ENCODE measurements at regions of chr12 and their contacts with region 1.

Region 1: DNA sequence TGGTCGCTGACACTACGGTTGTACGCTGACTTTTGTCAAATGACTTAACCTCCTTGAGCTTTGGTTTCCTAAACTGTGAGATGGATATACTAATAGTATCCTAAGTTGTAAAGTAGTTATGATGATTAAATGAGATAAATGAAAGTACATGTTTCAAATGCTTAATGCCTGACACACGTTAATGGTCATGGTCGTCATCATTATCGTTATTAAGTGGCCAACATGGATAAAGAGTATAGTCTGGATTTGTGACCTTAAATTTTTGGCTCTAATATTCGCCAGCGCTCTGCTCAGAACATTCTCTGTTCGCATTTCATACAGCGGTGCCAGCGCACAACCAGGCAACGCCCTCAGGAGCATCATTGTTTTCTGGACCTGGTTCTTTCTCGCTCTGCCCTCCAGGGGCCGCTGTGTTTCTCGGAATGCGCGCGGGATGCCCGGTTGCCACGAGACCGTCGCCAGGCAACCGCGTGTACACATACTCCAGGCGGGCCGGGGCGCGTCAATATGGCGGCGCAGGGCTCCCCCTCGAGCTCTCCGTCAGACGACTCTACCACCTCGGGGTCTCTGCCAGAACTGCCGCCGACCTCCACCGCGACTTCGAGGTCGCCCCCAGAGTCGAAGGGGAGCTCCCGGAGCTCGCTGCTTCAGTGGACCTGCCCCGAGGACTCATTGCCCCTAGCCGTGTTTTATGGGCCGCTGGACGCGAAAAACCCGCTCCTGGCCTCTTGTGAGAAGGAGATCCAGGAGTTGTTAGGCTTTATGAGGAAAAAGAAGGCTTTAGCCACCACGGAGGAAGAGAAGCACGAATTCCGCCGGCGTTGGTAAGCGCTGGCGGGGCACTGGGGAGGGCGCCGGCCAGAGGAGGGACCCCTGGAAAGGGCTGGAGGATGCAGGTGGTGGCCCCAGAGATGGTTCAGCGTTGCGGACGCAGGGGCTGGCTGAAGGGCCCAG is at the start of gene CFAP54:
- DNase-seq: peak; percentile 86 to 95
- ATAC-seq: peak; percentile 95 to 96
- H3K4me3 ChIP-seq: peak within 1 kb of the TSS; percentile 89
- H3K27ac ChIP-seq: peak within 1 kb of the TSS; percentile 77 to 93
- H3K4me1 ChIP-seq: peaks cover 39% of the 10 kb centered on the region
- CTCF ChIP-seq: peak; percentile 81
- EP300 ChIP-seq: no peak
- POLR2A ChIP-seq: peak; percentile 26; the same call in 1 of the 2 replicates
- RAD21 ChIP-seq: peak; percentile 61 to 68
- polyA plus RNA-seq, gene CFAP54: 1.2 and 1.7 TPM in 2 replicates

Region 2: DNA sequence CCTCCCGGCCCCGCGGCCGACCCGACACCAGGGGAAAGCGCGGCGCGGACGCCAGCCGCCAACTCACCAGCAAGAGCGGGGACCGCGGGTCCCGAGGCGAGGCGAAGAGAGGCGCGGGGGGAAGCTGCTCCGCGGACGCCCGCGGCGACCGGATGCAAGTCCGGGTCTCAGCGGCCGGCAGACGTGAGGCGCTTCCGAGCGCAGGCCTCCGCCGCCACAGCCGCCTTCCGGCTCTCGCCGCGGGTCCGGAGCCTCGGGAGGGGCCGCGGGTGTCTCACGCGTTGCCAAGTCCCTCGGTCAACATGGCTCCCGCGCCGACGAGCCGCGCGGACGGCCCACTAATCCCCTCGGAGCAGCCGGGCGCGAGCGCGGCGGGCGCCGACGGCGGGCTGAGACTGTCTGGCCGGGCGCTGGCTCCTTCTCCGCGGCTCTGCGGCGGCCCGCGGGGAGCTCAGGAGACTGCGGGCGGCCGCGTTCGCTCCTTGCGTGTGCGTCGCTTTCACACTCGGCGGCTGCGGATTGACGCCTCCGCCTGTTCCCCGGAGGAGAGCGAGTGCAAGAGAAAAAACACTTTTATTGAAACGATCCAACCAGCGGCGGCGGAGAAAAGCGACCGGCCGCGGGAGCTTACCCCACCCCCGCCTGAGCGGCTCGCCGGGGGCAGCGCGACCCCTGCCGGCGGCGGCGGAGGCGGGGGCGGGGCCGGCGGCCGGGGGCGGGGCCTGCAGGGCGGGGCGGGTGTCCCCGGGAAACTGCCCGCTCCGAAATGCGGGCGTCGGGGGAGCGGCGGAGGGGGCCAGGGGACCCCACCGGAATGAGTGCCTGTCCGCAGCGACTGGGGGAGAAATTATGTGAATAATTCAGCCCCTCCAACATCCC is 89.2 kb before region 1 on chr12 and contains the start of gene CDK17:
- CTCF ChIA-PET with region 1: interaction called, 11 read pairs
- POLR2A ChIA-PET with region 1: interaction called, 14 read pairs
- DNase-seq: peak; percentile 78 to 86
- ATAC-seq: peak; percentile 66 to 77
- H3K4me3 ChIP-seq: peak within 1 kb of the TSS; percentile 90
- H3K27ac ChIP-seq: peak within 1 kb of the TSS; percentile 96
- H3K4me1 ChIP-seq: peaks cover 33% of the 10 kb centered on the region
- CTCF ChIP-seq: peak; percentile 90
- EP300 ChIP-seq: no peak
- POLR2A ChIP-seq: peak; percentile 47
- RAD21 ChIP-seq: peak; percentile 43 to 79
- polyA plus RNA-seq, gene CDK17: 34.5 and 43.5 TPM in 2 replicates

Region 3: DNA sequence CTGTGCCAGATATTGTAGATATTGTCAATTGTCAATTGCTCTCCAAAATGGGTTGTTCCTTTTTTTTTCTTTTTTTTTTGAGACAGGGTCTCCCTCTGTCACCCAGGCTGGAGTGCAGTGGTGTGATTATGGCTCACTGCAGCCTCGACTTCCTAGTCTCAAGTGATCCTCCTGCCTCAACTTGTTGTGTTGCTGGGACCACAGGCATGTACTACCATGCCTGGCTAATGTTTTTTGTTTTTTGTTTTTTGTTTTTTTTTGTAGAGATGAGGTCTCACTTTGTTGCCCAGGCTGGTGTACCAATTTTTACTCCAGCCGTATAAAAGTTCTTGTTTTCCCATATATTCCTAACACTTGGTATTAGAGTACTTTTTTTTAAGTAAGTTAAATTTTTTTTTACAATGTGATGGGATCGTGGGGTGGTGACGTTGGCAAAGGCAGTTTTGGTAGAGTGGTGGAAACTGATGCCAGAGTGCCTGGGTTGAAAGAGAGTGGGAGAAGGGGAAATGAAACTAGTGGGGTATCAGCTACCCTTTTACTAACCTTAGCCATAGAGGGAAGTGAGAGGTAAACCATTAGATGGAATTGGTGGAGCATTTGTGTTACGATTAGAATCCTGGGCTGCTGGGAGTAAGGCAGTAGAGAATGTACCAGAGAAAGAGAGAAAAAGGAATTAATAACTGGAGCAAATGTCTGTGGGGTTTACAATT is 33.0 kb before region 1 on chr12:
- CTCF ChIA-PET with region 1: interaction called, 11 read pairs
- POLR2A ChIA-PET with region 1: no interaction called
- DNase-seq: no peak
- ATAC-seq: no peak
- H3K4me3 ChIP-seq: no peak overlapping the region
- H3K27ac ChIP-seq: no peak overlapping the region
- H3K4me1 ChIP-seq: no peaks in the 10 kb centered on the region
- CTCF ChIP-seq: no peak
- EP300 ChIP-seq: no peak
- POLR2A ChIP-seq: no peak
- RAD21 ChIP-seq: no peak

Region 4: DNA sequence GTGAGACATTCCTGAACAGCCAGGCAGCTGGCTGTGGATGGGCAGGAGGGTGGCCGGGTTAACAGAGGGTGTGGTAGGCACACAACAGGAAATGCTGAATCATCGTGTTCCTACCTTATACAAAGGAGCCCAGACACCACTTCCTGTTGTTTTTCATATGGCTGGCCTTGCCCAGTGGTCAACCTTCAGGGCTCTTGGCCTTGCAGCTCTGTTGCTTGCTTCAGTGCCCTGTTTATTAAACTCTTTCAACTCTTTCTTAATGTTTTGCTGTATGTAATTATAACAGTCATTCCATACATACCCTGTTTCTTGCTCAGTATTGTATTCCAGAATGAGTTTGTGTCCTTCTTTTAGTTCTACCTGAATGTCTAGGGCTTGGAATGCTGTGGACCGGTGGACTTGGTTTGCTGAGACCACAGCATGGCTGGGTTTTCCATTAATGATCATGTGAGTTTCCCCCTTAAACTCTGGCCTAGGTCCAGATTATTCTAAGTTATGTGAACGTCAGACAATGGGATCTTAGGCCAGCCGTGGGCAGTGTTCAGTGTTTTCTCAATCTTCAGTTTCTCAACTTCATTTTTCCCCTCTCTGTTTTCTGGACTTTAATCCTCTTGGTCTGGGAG is 11.9 kb after region 1 on chr12:
- CTCF ChIA-PET with region 1: interaction called, 15 read pairs
- POLR2A ChIA-PET with region 1: interaction called, 4 read pairs
- DNase-seq: peak; percentile 77 to 84
- ATAC-seq: peak; percentile 76 to 93; a peak in 4 of 6 replicates
- H3K4me3 ChIP-seq: no peak overlapping the region
- H3K27ac ChIP-seq: peak overlapping the region; percentile 65 to 84
- H3K4me1 ChIP-seq: peaks cover 17% of the 10 kb centered on the region
- CTCF ChIP-seq: no peak
- EP300 ChIP-seq: no peak
- POLR2A ChIP-seq: no peak
- RAD21 ChIP-seq: no peak

Region 5: GRCh38 chr12:96506776-96507175 is 17.4 kb after region 1 on chr12:
- CTCF ChIA-PET with region 1: interaction called, 11 read pairs
- POLR2A ChIA-PET with region 1: interaction called, 4 read pairs
- DNase-seq: no peak
- ATAC-seq: no peak
- H3K4me3 ChIP-seq: no peak overlapping the region
- H3K27ac ChIP-seq: no peak overlapping the region
- H3K4me1 ChIP-seq: peaks cover 7% of the 10 kb centered on the region; the same call in 2 of the 3 replicates
- CTCF ChIP-seq: no peak
- EP300 ChIP-seq: no peak
- POLR2A ChIP-seq: no peak
- RAD21 ChIP-seq: no peak

Region 6: DNA sequence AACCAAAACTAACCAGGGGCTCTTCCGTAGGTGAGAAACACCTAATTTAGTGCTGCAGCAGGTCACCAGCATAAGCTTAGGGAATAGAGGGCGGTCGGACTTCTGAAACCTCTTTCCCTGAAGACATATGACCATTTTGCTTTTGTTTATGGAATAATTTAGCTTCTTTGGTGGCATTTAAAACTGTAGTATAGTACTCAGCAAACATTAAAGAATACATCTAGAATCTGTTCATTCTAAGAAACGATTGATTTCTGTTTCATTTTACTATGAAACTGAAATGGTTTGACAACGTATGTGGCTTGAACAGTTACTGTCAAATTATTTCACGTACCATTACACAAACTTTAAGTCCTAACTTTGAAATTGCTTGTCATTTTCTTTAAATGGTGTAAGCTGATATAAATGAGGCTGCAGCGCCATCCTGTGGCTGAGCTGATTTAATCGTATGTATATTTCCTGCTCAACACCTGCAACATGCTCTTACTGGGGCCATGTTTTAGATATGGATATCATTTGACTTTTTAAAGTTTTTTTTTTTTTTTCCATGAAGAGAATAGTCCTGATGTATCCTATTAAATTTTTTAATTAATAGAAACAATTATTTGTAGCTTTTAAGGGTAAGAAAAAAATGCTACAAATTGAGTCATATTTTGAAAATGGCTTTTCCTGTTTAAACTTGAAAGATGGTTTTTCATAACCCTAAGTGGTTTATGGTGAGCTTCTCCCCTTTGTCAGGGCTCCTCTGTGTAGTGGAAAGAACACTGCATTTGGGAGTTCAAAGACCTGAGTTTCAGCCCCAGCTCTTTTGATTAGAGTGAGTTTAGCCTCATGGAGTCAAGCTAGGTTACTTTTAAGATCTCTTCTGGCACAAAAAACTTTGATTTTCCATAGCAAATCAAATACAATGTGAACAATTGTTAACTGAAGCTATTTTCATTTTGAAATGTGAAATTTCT is 27.4 kb after region 1 on chr12:
- CTCF ChIA-PET with region 1: interaction called, 21 read pairs
- POLR2A ChIA-PET with region 1: interaction called, 3 read pairs
- DNase-seq: peak; percentile 56 to 84
- ATAC-seq: peak; percentile 80 to 90; a peak in 5 of 6 replicates
- H3K4me3 ChIP-seq: no peak overlapping the region
- H3K27ac ChIP-seq: no peak overlapping the region
- H3K4me1 ChIP-seq: peaks cover 9% of the 10 kb centered on the region; the same call in 1 of the 3 replicates
- CTCF ChIP-seq: peak; percentile 90
- EP300 ChIP-seq: no peak
- POLR2A ChIP-seq: no peak
- RAD21 ChIP-seq: peak; percentile 94 to 95

Region 7: DNA sequence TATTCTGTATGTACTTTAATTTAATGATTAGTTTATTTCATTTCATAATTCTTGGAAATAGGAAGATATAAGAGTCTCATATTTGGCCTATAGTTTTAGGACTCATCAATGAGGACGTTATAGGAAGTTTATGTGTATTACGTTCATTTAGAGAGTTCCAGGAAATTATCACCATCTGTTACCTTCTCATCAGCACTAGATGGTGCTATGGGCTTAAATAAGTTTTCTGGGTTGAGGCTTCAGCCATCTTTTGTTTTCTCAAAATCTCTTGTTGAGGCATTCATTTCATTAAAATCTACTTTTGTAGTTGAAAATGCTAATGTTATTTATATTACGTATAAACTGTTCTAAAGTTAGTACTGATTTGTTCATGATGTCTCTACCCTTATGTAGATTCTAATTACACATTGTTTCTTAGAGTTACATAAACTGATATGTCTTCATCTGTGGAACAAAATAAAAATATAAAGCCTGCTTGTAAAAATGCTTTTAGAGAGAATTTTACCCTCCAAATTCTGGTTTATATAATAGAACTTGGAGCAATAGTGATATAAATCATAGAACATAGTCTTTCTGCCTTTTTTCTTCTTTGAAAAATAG is 89.2 kb after region 1 on chr12:
- CTCF ChIA-PET with region 1: no interaction called
- POLR2A ChIA-PET with region 1: no interaction called
- DNase-seq: peak; percentile 48 to 66
- ATAC-seq: peak; percentile 90 to 93
- H3K4me3 ChIP-seq: no peak overlapping the region
- H3K27ac ChIP-seq: no peak overlapping the region
- H3K4me1 ChIP-seq: no peaks in the 10 kb centered on the region
- CTCF ChIP-seq: peak; percentile 90
- EP300 ChIP-seq: no peak
- POLR2A ChIP-seq: no peak
- RAD21 ChIP-seq: peak; percentile 89

Region 8: DNA sequence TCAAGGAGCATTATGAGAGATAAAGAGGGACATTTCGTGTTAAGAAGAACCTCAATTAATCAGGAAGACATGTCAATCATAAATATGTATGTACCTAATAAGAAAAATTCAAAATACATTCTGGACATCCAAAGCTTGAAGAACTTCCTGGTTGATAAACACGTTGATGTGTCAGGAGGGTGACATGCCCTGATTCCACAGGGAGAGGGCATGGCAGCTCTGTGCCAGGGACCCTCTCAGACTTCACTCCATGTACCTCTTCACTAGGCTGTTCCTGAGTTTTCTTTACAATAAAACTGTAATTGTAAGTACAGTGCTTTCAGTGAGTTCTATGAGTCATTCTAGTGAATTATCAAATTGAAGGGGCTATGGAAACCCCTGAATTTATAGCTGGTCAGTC is 163.5 kb after region 1 on chr12:
- CTCF ChIA-PET with region 1: no interaction called
- POLR2A ChIA-PET with region 1: no interaction called
- DNase-seq: peak in 1 of 2 experiments; percentile 6
- ATAC-seq: no peak
- H3K4me3 ChIP-seq: no peak overlapping the region
- H3K27ac ChIP-seq: no peak overlapping the region
- H3K4me1 ChIP-seq: no peaks in the 10 kb centered on the region
- CTCF ChIP-seq: no peak
- EP300 ChIP-seq: no peak
- POLR2A ChIP-seq: no peak
- RAD21 ChIP-seq: no peak